ENCODE measurements at regions of chr3 and their contacts with region 1.

Region 1: GRCh38 chr3:12484198-12484974 is at the start of gene TSEN2:
- DNase-seq: peak; percentile 81 to 98 (median 88)

Region 2: GRCh38 chr3:11846281-11847034 is 637.9 kb before region 1 on chr3 and contains the start of gene TAMM41:
- intact Hi-C with region 1: loop called (anchors 10 kb)
- DNase-seq: peak; percentile 85 to 99 (median 94)

Region 3: DNA sequence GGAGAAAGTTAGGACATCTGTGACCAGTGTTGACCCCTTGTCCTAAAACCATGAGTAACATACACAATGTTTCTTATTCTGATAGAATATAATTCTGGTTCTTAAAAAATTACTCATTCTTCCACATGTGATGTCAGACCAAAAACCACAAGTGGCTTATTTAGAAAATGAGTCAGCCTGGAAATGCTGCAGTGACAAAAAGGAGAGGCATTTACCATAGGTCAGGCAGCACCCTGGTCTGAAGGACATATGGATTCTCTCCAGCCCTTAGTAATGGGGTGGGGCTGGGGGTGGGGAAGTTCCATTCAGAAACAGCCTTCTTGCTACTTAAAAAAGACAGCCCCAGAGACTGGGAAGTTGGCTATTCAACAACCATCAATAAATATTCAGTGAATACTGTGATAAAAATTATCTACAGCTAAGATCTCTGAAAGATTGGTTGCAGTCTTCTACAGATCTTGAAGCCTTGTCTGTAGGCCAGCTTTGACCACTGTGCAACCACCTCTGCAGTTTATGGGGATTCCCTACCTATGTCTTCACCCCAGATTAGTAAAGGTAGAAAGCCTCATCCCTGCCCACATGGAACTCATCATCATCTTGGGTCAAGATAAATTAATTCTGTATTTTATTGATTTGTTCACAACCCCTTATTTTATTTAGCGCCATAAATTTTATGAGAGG is 290.8 kb before region 1 on chr3:
- intact Hi-C with region 1: loop called (anchors 5 kb)
- DNase-seq: no peak

Region 4: GRCh38 chr3:12471243-12471651 is 13.1 kb before region 1 on chr3:
- intact Hi-C with region 1: no loop called
- DNase-seq: no peak

Region 5: DNA sequence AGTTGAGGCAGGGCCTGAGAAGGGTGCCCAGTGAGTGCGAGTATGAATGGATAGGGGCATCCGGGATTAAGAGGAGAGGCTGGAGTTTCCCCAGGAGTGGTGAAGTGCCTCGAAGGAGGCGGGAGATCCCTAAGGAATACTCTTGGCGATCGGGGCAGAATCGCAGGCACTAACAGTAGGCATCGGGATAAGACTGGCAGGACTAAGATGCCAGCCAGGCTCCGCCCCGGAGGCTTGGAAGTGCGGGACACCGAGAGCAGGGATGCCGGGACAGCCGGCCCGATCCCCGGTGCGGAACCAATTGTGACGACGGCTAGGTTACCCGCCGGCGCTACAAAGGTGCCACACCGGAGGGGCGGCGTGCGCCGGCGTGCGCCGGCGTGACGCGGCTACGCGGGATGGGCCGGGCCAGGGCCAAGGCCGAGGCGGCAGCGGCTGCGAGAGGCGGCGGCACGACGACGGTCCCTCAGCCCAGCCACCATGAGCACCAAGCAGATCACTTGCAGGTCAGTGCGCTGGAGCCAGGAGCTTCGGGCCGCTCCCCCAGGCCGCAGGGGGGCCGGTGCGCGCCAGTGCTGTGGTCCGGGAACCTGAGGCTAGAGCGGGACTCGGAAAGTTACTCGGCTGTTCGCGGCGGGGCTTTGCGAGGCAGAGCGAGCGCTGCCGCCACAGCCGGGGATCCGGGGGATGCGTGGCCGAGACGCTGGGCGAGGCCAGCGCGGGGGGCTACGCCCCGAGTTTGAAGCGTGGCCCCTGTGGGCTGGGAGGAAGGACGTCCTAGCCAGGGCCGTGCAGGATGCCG is 72.5 kb after region 1 on chr3 and contains the start of gene MKRN2:
- intact Hi-C with region 1: loop called (anchors 2 kb)
- DNase-seq: peak; percentile 75 to 97 (median 86)

Region 6: DNA sequence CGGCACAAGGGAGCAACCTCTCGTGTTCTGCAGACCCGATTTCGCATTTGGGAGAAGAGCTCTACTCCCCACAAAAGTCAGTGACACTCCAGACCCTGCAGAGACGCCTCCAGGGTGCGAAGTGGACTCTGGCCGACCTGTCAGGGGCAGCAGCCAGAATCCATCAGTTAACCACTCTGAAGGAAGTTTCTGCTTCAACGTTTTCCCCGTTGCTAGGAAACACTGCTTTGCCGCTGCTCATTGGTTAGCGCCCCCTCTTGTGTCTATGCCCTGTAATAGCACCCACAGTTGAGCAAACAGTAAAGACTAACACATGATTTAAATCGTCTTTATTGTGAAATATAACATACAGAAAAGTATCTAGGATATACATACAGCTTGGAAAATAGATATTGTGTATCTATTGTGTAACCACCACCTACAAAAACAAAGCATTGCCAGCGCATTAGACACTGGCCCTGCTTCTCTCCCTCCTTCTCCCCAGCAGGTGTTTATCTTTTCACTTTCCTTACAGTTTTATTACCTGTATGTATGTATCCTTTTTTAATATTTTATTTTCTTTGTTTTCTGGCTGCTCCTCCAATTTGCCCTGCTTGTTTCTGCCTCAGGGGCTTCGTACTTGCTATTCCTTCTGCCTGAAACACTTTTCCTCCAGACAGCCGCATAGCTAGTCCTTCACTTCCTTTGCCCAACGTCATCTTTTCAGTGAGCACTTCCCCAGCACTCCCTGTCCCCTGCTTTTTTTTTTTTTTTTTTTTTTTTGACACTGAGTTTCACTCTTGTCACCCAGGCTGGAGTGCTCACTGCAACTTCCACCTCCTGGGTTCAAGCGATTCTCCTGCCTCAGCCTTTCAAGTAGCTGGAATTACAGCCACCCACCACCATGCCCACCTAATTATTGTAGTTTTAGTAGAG is 235.9 kb after region 1 on chr3:
- intact Hi-C with region 1: loop called (anchors 2 kb)
- DNase-seq: peak; percentile 36 to 93 (median 66)